Right cardiac atrium (tissue), 5 donors: ENCODE measurements at regions of chr4 and their contacts with region 1.

Region 1: DNA sequence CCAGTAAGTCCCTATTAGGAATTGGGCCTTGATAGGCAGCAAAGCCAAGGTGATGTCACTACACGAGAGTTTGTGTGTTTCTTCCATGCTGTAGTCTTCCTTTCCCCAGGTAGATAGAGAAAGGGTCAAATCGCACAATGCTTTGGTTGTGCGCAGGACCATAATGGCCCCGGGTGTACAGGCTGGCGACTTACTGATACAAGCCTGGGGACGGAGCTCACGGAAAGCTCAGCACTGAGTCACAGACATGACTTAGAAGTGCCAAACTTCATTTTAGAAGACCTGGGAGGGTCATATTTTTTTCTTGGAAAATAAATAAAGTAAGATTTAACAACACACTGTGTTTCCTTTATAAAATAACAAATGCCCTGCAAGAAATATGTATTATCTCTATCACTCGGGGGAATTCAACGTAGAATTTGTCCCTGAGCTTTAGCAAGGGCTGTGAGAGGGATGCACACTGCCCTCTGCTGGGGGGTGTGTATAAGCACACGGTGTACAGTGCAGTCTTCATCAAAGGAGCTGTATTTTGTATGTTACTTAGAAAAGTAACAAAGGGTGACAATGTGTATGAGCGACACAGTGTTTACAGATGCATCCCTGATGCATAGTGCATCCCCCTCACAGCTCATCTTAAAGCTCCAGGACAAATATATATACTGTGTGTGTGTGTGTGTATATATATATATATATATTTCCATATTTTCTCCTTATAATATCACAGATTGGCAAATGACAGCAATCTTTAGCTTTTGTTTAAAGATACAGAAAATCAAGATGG is 254.5 kb upstream of the VEGFC start:
- DNase-seq: peak; percentile 53 to 75 (median 55)
- ATAC-seq: peak; percentile 76 to 92
- H3K4me3 ChIP-seq: no peak overlapping the region
- H3K27ac ChIP-seq: no peak overlapping the region
- H3K4me1 ChIP-seq: no peaks in the 10 kb centered on the region
- H3K27me3 ChIP-seq: no peaks in the 10 kb centered on the region

Region 2: GRCh38 chr4:176377780-176378179 is 669.5 kb before region 1 on chr4:
- intact Hi-C with region 1: loop called in 3 of 4 experiments (anchors 5 to 10 kb)
- DNase-seq: no peak
- ATAC-seq: peak in 1 of 2 donors; percentile 34
- H3K4me3 ChIP-seq: no peak overlapping the region
- H3K27ac ChIP-seq: no peak overlapping the region
- H3K4me1 ChIP-seq: no peaks in the 10 kb centered on the region
- H3K27me3 ChIP-seq: no peaks in the 10 kb centered on the region

Region 3: DNA sequence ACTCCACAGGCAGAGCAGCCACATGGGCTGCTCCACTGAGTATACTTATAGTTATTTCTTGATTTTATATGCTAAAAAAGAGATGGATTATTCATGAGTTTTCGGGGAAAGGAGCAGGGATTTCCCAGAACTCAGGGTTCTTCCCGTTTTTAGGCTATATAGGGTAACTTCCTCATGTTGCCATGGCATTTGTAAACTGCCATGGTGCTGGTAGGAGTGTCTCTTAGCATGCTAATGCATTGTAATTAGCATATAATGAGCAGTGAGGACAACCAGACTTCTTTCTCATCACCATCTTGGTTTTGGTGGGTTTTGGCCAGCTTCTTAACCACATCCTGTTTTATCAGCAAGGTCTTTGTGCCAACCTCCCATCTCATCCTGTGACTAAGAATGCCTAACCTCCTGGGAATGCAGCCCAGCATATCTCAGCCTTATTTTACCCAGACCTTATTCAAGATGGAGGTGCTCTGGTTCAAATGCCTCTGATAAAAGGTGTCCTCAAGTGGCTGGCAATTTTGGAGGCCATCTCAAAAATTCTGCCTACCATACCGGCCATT is 41.5 kb before region 1 on chr4:
- intact Hi-C with region 1: no loop called
- DNase-seq: no peak
- ATAC-seq: no peak
- H3K4me3 ChIP-seq: no peak overlapping the region
- H3K27ac ChIP-seq: no peak overlapping the region
- H3K4me1 ChIP-seq: no peaks in the 10 kb centered on the region
- H3K27me3 ChIP-seq: no peaks in the 10 kb centered on the region

Region 4: GRCh38 chr4:177225605-177226004 is 178.3 kb after region 1 on chr4:
- intact Hi-C with region 1: no loop called
- DNase-seq: no peak
- ATAC-seq: no peak
- H3K4me3 ChIP-seq: no peak overlapping the region
- H3K27ac ChIP-seq: no peak overlapping the region
- H3K4me1 ChIP-seq: no peaks in the 10 kb centered on the region
- H3K27me3 ChIP-seq: no peaks in the 10 kb centered on the region